ENCODE measurements at regions of chr18 and their contacts with region 1.

Region 1: GRCh38 chr18:48777026-48777743 is 173.6 kb downstream of the SMAD7 start:
- DNase-seq: peak; percentile 40 to 85 (median 65)
- ATAC-seq: peak; percentile 89
- H3K4me3 ChIP-seq: no peak overlapping the region
- H3K4me3 Mint-ChIP-seq: no peak overlapping the region
- H3K27ac ChIP-seq: no peak overlapping the region
- H3K27ac Mint-ChIP-seq: no peak overlapping the region
- H3K4me1 ChIP-seq: peaks cover 6% of the 10 kb centered on the region
- H3K4me1 Mint-ChIP-seq: peaks cover 2% of the 10 kb centered on the region
- H3K27me3 ChIP-seq: no peaks in the 10 kb centered on the region
- H3K27me3 Mint-ChIP-seq: peaks cover 7% of the 10 kb centered on the region
- CTCF ChIP-seq: peak; percentile 84

Region 2: GRCh38 chr18:48806551-48807261 is 29.5 kb after region 1 on chr18:
- CTCF ChIA-PET with region 1: interaction called, 6 read pairs
- POLR2A ChIA-PET with region 1: no interaction called
- intact Hi-C with region 1: loop called in 1 of 2 experiments (anchors 2 kb)
- DNase-seq: peak in 5 of 9 experiments; percentile 24 to 86 (median 56)
- ATAC-seq: peak; percentile 90
- H3K4me3 ChIP-seq: no peak overlapping the region
- H3K4me3 Mint-ChIP-seq: no peak overlapping the region
- H3K27ac ChIP-seq: peak overlapping the region in 1 of 2 experiments; percentile 34
- H3K27ac Mint-ChIP-seq: peak overlapping the region; percentile 57
- H3K4me1 ChIP-seq: peaks cover 16% of the 10 kb centered on the region
- H3K4me1 Mint-ChIP-seq: peaks cover 24% of the 10 kb centered on the region
- H3K27me3 ChIP-seq: no peaks in the 10 kb centered on the region
- H3K27me3 Mint-ChIP-seq: no peaks in the 10 kb centered on the region
- CTCF ChIP-seq: no peak

Region 3: GRCh38 chr18:48913201-48913600 is 136.0 kb after region 1 on chr18:
- CTCF ChIA-PET with region 1: interaction called, 61 read pairs
- POLR2A ChIA-PET with region 1: no interaction called
- intact Hi-C with region 1: loop called (anchors 1 kb)
- DNase-seq: peak in 7 of 9 experiments; percentile 33 to 76 (median 54)
- ATAC-seq: peak; percentile 67
- H3K4me3 ChIP-seq: no peak overlapping the region
- H3K4me3 Mint-ChIP-seq: no peak overlapping the region
- H3K27ac ChIP-seq: no peak overlapping the region
- H3K27ac Mint-ChIP-seq: no peak overlapping the region
- H3K4me1 ChIP-seq: peaks cover 18% of the 10 kb centered on the region
- H3K4me1 Mint-ChIP-seq: peaks cover 31% of the 10 kb centered on the region
- H3K27me3 ChIP-seq: no peaks in the 10 kb centered on the region
- H3K27me3 Mint-ChIP-seq: no peaks in the 10 kb centered on the region
- CTCF ChIP-seq: peak; percentile 41

Region 4: DNA sequence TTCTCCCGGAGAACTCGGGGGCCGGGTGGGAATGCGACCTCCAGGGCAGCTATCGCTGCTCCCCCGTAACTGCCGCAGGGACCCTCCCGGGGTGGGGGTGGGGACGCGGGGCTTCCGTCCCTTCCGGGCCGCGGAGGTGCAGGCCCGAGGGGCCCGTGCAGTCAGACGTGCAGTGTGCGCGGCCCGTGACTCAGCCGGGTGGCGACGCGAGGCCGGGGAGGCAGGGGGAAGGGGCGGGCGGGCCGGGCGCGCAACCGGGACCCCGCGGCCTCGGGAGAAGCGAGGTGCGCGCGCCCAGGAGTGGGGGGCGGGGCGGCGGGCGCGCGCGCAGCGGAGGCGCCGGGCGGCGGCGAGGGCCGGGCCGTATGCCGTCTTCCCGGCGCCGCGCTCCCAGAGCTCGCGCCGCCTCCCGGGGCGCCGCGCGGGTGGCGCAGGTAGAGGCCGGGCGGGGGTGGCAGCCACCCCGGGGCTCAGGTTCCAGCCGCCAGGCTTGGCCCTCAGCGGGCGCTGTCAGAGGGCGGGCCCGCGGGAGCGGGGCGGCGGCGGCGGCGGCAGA is 198.5 kb after region 1 on chr18:
- CTCF ChIA-PET with region 1: interaction called, 3 read pairs
- POLR2A ChIA-PET with region 1: no interaction called
- intact Hi-C with region 1: loop called (anchors 2 to 5 kb)
- DNase-seq: peak in 8 of 9 experiments; percentile 28 to 77 (median 58)
- ATAC-seq: peak; percentile 77
- H3K4me3 ChIP-seq: peak overlapping the region; percentile 48 to 50
- H3K4me3 Mint-ChIP-seq: peak overlapping the region; percentile 59
- H3K27ac ChIP-seq: no peak overlapping the region
- H3K27ac Mint-ChIP-seq: no peak overlapping the region
- H3K4me1 ChIP-seq: peaks cover 11% of the 10 kb centered on the region
- H3K4me1 Mint-ChIP-seq: peaks cover 7% of the 10 kb centered on the region
- H3K27me3 ChIP-seq: no peaks in the 10 kb centered on the region
- H3K27me3 Mint-ChIP-seq: peaks cover 29% of the 10 kb centered on the region
- CTCF ChIP-seq: no peak

Region 5: GRCh38 chr18:49178736-49179135 is 401.6 kb after region 1 on chr18:
- CTCF ChIA-PET with region 1: interaction called, 5 read pairs
- POLR2A ChIA-PET with region 1: no interaction called
- intact Hi-C with region 1: loop called (anchors 1 to 5 kb)
- DNase-seq: peak in 3 of 9 experiments; percentile 17 to 35 (median 23)
- ATAC-seq: no peak
- H3K4me3 ChIP-seq: no peak overlapping the region
- H3K4me3 Mint-ChIP-seq: no peak overlapping the region
- H3K27ac ChIP-seq: no peak overlapping the region
- H3K27ac Mint-ChIP-seq: no peak overlapping the region
- H3K4me1 ChIP-seq: no peaks in the 10 kb centered on the region
- H3K4me1 Mint-ChIP-seq: peaks cover 11% of the 10 kb centered on the region
- H3K27me3 ChIP-seq: no peaks in the 10 kb centered on the region
- H3K27me3 Mint-ChIP-seq: no peaks in the 10 kb centered on the region
- CTCF ChIP-seq: peak; percentile 29

Region 6: GRCh38 chr18:49225160-49225559 is 448.0 kb after region 1 on chr18:
- CTCF ChIA-PET with region 1: no interaction called
- POLR2A ChIA-PET with region 1: no interaction called
- intact Hi-C with region 1: no loop called
- DNase-seq: no peak
- ATAC-seq: no peak
- H3K4me3 ChIP-seq: no peak overlapping the region
- H3K4me3 Mint-ChIP-seq: no peak overlapping the region
- H3K27ac ChIP-seq: no peak overlapping the region
- H3K27ac Mint-ChIP-seq: no peak overlapping the region
- H3K4me1 ChIP-seq: peaks cover 13% of the 10 kb centered on the region
- H3K4me1 Mint-ChIP-seq: peaks cover 22% of the 10 kb centered on the region
- H3K27me3 ChIP-seq: no peaks in the 10 kb centered on the region
- H3K27me3 Mint-ChIP-seq: no peaks in the 10 kb centered on the region
- CTCF ChIP-seq: no peak

Region 7: GRCh38 chr18:49412679-49413078 is 635.5 kb after region 1 on chr18:
- CTCF ChIA-PET with region 1: interaction called, 3 read pairs
- POLR2A ChIA-PET with region 1: no interaction called
- intact Hi-C with region 1: loop called in 1 of 2 experiments (anchors 2 kb)
- DNase-seq: no peak
- ATAC-seq: peak; percentile 23
- H3K4me3 ChIP-seq: no peak overlapping the region
- H3K4me3 Mint-ChIP-seq: peak overlapping the region; percentile 13
- H3K27ac ChIP-seq: no peak overlapping the region
- H3K27ac Mint-ChIP-seq: peak overlapping the region; percentile 87
- H3K4me1 ChIP-seq: peaks cover 20% of the 10 kb centered on the region
- H3K4me1 Mint-ChIP-seq: peaks cover 46% of the 10 kb centered on the region
- H3K27me3 ChIP-seq: no peaks in the 10 kb centered on the region
- H3K27me3 Mint-ChIP-seq: no peaks in the 10 kb centered on the region
- CTCF ChIP-seq: no peak